H1 (cell line): ENCODE measurements at regions of chr12 and their contacts with region 1.

Region 1: GRCh38 chr12:54207484-54208294 is 18.9 kb upstream of the SMUG1 start:
- DNase-seq: peak in 1 of 2 experiments; percentile 99
- H3K4me3 ChIP-seq: no peak overlapping the region
- H3K27ac ChIP-seq: no peak overlapping the region
- H3K4me1 ChIP-seq: peaks cover 0 to 5% (median under 1%) of the 10 kb centered on the region in 4 experiments; a peak in 2 of 7 replicates
- H3K27me3 ChIP-seq: peaks cover 8 to 46% (median 37%) of the 10 kb centered on the region in 4 experiments; a peak in 6 of 7 replicates
- CTCF ChIP-seq: peak; percentile 98 to 99 (median 99)
- EP300 ChIP-seq: no peak
- POLR2A ChIP-seq: no peak
- RAD21 ChIP-seq: peak; percentile 95 to 98

Region 2: GRCh38 chr12:53995378-53996239 is 212.1 kb before region 1 on chr12:
- CTCF ChIA-PET with region 1: interaction called, 154 read pairs
- POLR2A ChIA-PET with region 1: no interaction called
- DNase-seq: peak in 1 of 2 experiments; percentile 80
- H3K4me3 ChIP-seq: peak overlapping the region in 1 of 4 experiments; percentile 45; a peak in 3 of 8 replicates
- H3K27ac ChIP-seq: no peak overlapping the region
- H3K4me1 ChIP-seq: peaks cover 0 to 17% (median 8%) of the 10 kb centered on the region in 4 experiments; a peak in 5 of 7 replicates
- H3K27me3 ChIP-seq: peaks cover 97 to 100% (median 100%) of the 10 kb centered on the region in 4 experiments
- CTCF ChIP-seq: no peak
- EP300 ChIP-seq: no peak
- POLR2A ChIP-seq: no peak
- RAD21 ChIP-seq: no peak

Region 3: GRCh38 chr12:54017878-54018467 is 189.7 kb before region 1 on chr12:
- CTCF ChIA-PET with region 1: interaction called, 32 read pairs
- POLR2A ChIA-PET with region 1: no interaction called
- DNase-seq: peak in 1 of 2 experiments; percentile 83
- H3K4me3 ChIP-seq: peak overlapping the region in 3 of 4 experiments; percentile 9 to 54 (median 26); a peak in 5 of 8 replicates
- H3K27ac ChIP-seq: no peak overlapping the region
- H3K4me1 ChIP-seq: peaks cover 0 to 12% (median 4%) of the 10 kb centered on the region in 4 experiments; a peak in 6 of 7 replicates
- H3K27me3 ChIP-seq: peaks cover 95 to 100% (median 100%) of the 10 kb centered on the region in 4 experiments
- CTCF ChIP-seq: no peak
- EP300 ChIP-seq: no peak
- POLR2A ChIP-seq: no peak
- RAD21 ChIP-seq: no peak

Region 4: DNA sequence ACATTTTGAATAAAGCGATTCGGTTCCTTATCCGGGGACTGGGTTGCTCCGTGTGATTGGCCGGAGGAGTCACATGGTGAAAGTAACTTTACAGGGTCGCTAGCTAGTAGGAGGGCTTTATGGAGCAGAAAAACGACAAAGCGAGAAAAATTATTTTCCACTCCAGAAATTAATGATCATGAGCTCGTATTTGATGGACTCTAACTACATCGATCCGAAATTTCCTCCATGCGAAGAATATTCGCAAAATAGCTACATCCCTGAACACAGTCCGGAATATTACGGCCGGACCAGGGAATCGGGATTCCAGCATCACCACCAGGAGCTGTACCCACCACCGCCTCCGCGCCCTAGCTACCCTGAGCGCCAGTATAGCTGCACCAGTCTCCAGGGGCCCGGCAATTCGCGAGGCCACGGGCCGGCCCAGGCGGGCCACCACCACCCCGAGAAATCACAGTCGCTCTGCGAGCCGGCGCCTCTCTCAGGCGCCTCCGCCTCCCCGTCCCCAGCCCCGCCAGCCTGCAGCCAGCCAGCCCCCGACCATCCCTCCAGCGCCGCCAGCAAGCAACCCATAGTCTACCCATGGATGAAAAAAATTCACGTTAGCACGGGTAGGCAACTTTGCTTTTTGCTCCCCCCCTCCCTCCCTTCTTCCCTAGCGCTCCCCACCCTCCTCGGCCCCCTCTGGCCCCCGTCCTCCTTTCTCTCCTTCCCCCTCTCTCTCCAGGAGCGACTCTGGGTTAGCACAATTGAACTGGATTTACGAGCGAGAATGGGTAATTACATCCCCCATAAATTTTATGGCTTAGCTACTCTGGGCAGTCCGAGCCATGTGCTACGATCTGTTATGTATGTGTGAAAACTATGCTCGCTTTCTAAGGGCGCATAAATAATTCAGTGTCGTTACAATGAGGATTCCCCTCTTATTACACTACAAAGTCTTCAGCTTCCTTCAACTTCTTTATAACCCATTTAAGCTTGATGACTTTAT is 153.6 kb before region 1 on chr12 and contains the start of gene HOXC4:
- CTCF ChIA-PET with region 1: interaction called, 12 read pairs
- POLR2A ChIA-PET with region 1: no interaction called
- DNase-seq: no peak
- H3K4me3 ChIP-seq: peak within 1 kb of the TSS in 1 of 4 experiments; percentile 51; a peak in 5 of 8 replicates
- H3K27ac ChIP-seq: no peak within 1 kb of the TSS
- H3K4me1 ChIP-seq: peaks cover 3 to 22% (median 8%) of the 10 kb centered on the region in 4 experiments; a peak in 6 of 7 replicates
- H3K27me3 ChIP-seq: peaks cover 95 to 100% (median 99%) of the 10 kb centered on the region in 4 experiments
- CTCF ChIP-seq: no peak
- EP300 ChIP-seq: no peak
- POLR2A ChIP-seq: no peak
- RAD21 ChIP-seq: no peak
- total RNA-seq, gene HOXC4: not detected in 2 replicates

Region 5: GRCh38 chr12:54140588-54141388 is 66.9 kb before region 1 on chr12:
- CTCF ChIA-PET with region 1: interaction called, 34 read pairs
- POLR2A ChIA-PET with region 1: no interaction called
- DNase-seq: no peak
- H3K4me3 ChIP-seq: no peak overlapping the region
- H3K27ac ChIP-seq: no peak overlapping the region
- H3K4me1 ChIP-seq: peaks cover 0 to 9% (median 2%) of the 10 kb centered on the region in 4 experiments; a peak in 3 of 7 replicates
- H3K27me3 ChIP-seq: peaks cover under 1 to 57% (median 26%) of the 10 kb centered on the region in 4 experiments
- CTCF ChIP-seq: no peak
- EP300 ChIP-seq: no peak
- POLR2A ChIP-seq: no peak
- RAD21 ChIP-seq: no peak

Region 6: GRCh38 chr12:54191550-54192022 is 16.1 kb before region 1 on chr12:
- CTCF ChIA-PET with region 1: interaction called, 178 read pairs
- POLR2A ChIA-PET with region 1: interaction called, 5 read pairs
- DNase-seq: peak; percentile 62 to 85
- H3K4me3 ChIP-seq: no peak overlapping the region
- H3K27ac ChIP-seq: no peak overlapping the region
- H3K4me1 ChIP-seq: no peaks in the 10 kb centered on the region; a peak in 2 of 7 replicates
- H3K27me3 ChIP-seq: peaks cover 6 to 50% (median 30%) of the 10 kb centered on the region in 4 experiments
- CTCF ChIP-seq: peak; percentile 73 to 93 (median 86)
- EP300 ChIP-seq: no peak
- POLR2A ChIP-seq: no peak
- RAD21 ChIP-seq: peak; percentile 92 to 96